ENCODE measurements at regions of chr19 and their contacts with region 1.

Region 1: GRCh38 chr19:1241417-1242095 is at the start of gene ATP5F1D:
- DNase-seq: peak; percentile 94
- ATAC-seq: peak; percentile 70
- H3K4me3 ChIP-seq: peak within 1 kb of the TSS; percentile 28 to 92 (median 57)
- H3K4me3 Mint-ChIP-seq: peak within 1 kb of the TSS; percentile 88
- H3K27ac ChIP-seq: peak within 1 kb of the TSS; percentile 24 to 65
- H3K27ac Mint-ChIP-seq: peak within 1 kb of the TSS; percentile 85
- H3K4me1 ChIP-seq: peaks cover 44 to 70% of the 10 kb centered on the region in 2 donors
- H3K4me1 Mint-ChIP-seq: peaks cover 40% of the 10 kb centered on the region
- H3K27me3 ChIP-seq: peaks cover 0 to 11% (median 4%) of the 10 kb centered on the region in 4 experiments
- H3K27me3 Mint-ChIP-seq: peaks cover 8% of the 10 kb centered on the region
- CTCF ChIP-seq: no peak
- total RNA-seq, gene ATP5F1D: 131 and 150 TPM in 2 replicates

Region 2: GRCh38 chr19:506404-507285 is 734.9 kb before region 1 on chr19:
- CTCF ChIA-PET with region 1: no interaction called
- POLR2A ChIA-PET with region 1: no interaction called
- intact Hi-C with region 1: loop called (anchors 5 kb)
- DNase-seq: peak; percentile 99
- ATAC-seq: peak; percentile 69
- H3K4me3 ChIP-seq: peak overlapping the region; percentile 74 to 98 (median 90)
- H3K4me3 Mint-ChIP-seq: peak overlapping the region; percentile 90
- H3K27ac ChIP-seq: peak overlapping the region; percentile 95 to 99
- H3K27ac Mint-ChIP-seq: peak overlapping the region; percentile 99
- H3K4me1 ChIP-seq: peaks cover 25 to 36% of the 10 kb centered on the region in 2 donors
- H3K4me1 Mint-ChIP-seq: peaks cover 33% of the 10 kb centered on the region
- H3K27me3 ChIP-seq: no peaks in the 10 kb centered on the region
- H3K27me3 Mint-ChIP-seq: no peaks in the 10 kb centered on the region
- CTCF ChIP-seq: peak; percentile 92

Region 3: DNA sequence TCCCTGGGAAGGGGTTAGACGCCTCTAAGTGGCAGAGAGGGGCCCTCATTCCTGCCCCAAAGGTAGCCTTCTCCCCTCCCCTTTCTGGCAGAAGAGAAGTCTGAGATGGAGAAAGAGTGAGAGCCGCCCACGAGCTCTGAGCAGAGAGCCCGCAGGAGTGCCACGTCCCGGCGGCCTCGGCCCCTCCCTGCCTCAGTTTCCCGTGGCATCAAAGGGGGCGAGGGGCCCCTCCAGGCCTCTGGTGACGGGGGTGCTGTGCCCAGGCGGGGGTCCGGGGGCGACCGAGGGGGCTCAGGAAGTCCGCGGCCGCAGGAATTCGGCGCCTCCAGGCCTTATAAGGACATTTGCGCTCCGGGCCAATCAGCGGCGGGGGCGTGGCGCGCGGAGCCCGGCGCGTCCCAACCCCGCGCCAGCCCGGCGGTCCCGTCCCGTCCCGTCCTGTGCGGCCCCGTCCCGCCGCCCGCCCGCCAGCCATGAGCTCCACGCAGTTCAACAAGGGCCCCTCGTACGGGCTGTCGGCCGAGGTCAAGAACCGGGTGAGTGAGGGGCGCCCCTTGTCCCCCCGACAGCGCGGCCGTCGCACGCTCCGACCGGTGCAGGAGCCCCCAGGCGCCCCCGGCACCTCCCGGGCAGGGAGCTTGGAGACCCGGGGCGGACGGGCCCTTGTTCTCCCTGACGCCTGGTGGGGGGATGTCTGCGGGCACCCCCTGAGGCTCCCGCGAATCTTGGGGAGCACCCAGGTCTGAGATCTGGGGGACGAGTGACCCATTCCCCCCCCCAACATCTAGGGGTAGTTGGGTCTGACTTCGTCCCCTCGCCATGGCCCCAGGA is 215.2 kb before region 1 on chr19 and contains the start of gene CNN2:
- CTCF ChIA-PET with region 1: interaction called, 14 read pairs
- POLR2A ChIA-PET with region 1: interaction called, 5 read pairs
- intact Hi-C with region 1: loop called (anchors 10 kb)
- DNase-seq: peak; percentile 81
- ATAC-seq: peak; percentile 57
- H3K4me3 ChIP-seq: peak within 1 kb of the TSS; percentile 60 to 99 (median 87)
- H3K4me3 Mint-ChIP-seq: peak within 1 kb of the TSS; percentile 94
- H3K27ac ChIP-seq: peak within 1 kb of the TSS; percentile 74 to 85
- H3K27ac Mint-ChIP-seq: peak within 1 kb of the TSS; percentile 91
- H3K4me1 ChIP-seq: peaks cover 16 to 37% of the 10 kb centered on the region in 2 donors
- H3K4me1 Mint-ChIP-seq: peaks cover 27% of the 10 kb centered on the region
- H3K27me3 ChIP-seq: no peaks in the 10 kb centered on the region
- H3K27me3 Mint-ChIP-seq: no peaks in the 10 kb centered on the region
- CTCF ChIP-seq: no peak
- total RNA-seq, gene CNN2: 186 and 198 TPM in 2 replicates

Region 4: GRCh38 chr19:1131738-1132551 is 109.6 kb before region 1 on chr19:
- CTCF ChIA-PET with region 1: interaction called, 7 read pairs
- POLR2A ChIA-PET with region 1: interaction called, 3 read pairs
- intact Hi-C with region 1: loop called (anchors 1 kb)
- DNase-seq: peak; percentile 91
- ATAC-seq: peak; percentile 73
- H3K4me3 ChIP-seq: peak overlapping the region; percentile 41 to 92 (median 78)
- H3K4me3 Mint-ChIP-seq: peak overlapping the region; percentile 90
- H3K27ac ChIP-seq: peak overlapping the region; percentile 78 to 89
- H3K27ac Mint-ChIP-seq: peak overlapping the region; percentile 93
- H3K4me1 ChIP-seq: peaks cover 42 to 58% of the 10 kb centered on the region in 2 donors
- H3K4me1 Mint-ChIP-seq: peaks cover 38% of the 10 kb centered on the region
- H3K27me3 ChIP-seq: no peaks in the 10 kb centered on the region
- H3K27me3 Mint-ChIP-seq: no peaks in the 10 kb centered on the region
- CTCF ChIP-seq: no peak

Region 5: GRCh38 chr19:1269065-1269477 is 27.5 kb after region 1 on chr19 and contains the start of gene CIRBP:
- CTCF ChIA-PET with region 1: interaction called, 658 read pairs
- POLR2A ChIA-PET with region 1: interaction called, 402 read pairs
- intact Hi-C with region 1: loop called (anchors 1 kb)
- DNase-seq: peak; percentile 100
- ATAC-seq: peak; percentile 66
- H3K4me3 ChIP-seq: peak within 1 kb of the TSS; percentile 75 to 96 (median 85)
- H3K4me3 Mint-ChIP-seq: peak within 1 kb of the TSS; percentile 95
- H3K27ac ChIP-seq: peak within 1 kb of the TSS; percentile 88 to 92
- H3K27ac Mint-ChIP-seq: peak within 1 kb of the TSS; percentile 95
- H3K4me1 ChIP-seq: peaks cover 67 to 86% of the 10 kb centered on the region in 2 donors
- H3K4me1 Mint-ChIP-seq: peaks cover 80% of the 10 kb centered on the region
- H3K27me3 ChIP-seq: no peaks in the 10 kb centered on the region
- H3K27me3 Mint-ChIP-seq: no peaks in the 10 kb centered on the region
- CTCF ChIP-seq: no peak
- total RNA-seq, gene CIRBP: 643 and 648 TPM in 2 replicates

Region 6: DNA sequence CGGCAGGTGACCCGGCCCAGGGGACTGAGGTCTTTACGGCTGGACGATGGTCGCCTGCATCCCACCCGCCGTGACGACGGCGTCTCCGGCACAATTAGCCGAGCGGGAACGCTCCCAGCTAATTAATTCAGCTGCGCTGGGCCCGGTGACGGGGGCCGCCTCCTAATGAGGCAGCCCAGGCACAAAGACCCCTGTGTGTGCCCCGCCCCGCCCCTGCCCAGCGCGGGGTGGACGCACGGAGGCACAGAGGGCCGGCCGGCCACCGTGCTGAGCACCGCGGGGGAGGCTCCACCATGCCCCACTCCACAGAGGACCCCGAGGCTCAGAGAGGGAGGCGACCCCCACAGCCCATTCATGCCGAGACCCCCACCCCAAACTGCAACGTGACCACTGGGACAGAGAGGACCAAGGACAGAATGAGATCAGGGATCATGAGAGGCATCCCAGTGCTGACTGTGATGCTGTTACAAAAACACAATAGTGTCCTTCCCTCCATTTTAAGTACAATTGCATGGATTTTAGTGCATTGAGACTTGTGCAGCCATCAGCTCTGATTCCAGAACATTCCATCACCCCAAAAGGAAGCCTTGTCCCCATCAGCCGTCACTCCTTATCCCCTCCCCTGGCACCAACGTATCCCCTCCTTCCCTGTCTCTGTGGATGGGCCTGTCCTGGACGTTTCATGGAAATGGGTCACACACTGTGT is 61.1 kb after region 1 on chr19:
- CTCF ChIA-PET with region 1: no interaction called
- POLR2A ChIA-PET with region 1: no interaction called
- intact Hi-C with region 1: no loop called
- DNase-seq: no peak
- ATAC-seq: no peak
- H3K4me3 ChIP-seq: no peak overlapping the region
- H3K4me3 Mint-ChIP-seq: no peak overlapping the region
- H3K27ac ChIP-seq: no peak overlapping the region
- H3K27ac Mint-ChIP-seq: no peak overlapping the region
- H3K4me1 ChIP-seq: no peaks in the 10 kb centered on the region
- H3K4me1 Mint-ChIP-seq: peaks cover 5% of the 10 kb centered on the region
- H3K27me3 ChIP-seq: peaks cover 0 to 3% (median 0%) of the 10 kb centered on the region in 4 experiments
- H3K27me3 Mint-ChIP-seq: peaks cover 4% of the 10 kb centered on the region
- CTCF ChIP-seq: no peak

Region 7: GRCh38 chr19:1383311-1384084 is 141.9 kb after region 1 on chr19 and contains the start of gene NDUFS7:
- CTCF ChIA-PET with region 1: interaction called, 9 read pairs
- POLR2A ChIA-PET with region 1: no interaction called
- intact Hi-C with region 1: loop called (anchors 1 kb)
- DNase-seq: peak; percentile 97
- ATAC-seq: peak; percentile 82
- H3K4me3 ChIP-seq: peak within 1 kb of the TSS; percentile 54 to 93 (median 76)
- H3K4me3 Mint-ChIP-seq: peak within 1 kb of the TSS; percentile 90
- H3K27ac ChIP-seq: peak within 1 kb of the TSS; percentile 76 to 85
- H3K27ac Mint-ChIP-seq: peak within 1 kb of the TSS; percentile 100
- H3K4me1 ChIP-seq: peaks cover 11 to 15% of the 10 kb centered on the region in 2 donors
- H3K4me1 Mint-ChIP-seq: peaks cover 17% of the 10 kb centered on the region
- H3K27me3 ChIP-seq: no peaks in the 10 kb centered on the region
- H3K27me3 Mint-ChIP-seq: peaks cover 3% of the 10 kb centered on the region
- CTCF ChIP-seq: peak; percentile 14
- total RNA-seq, gene NDUFS7: 58.8 and 59.0 TPM in 2 replicates

Measured in B cell (primary cell).